Activated CD4-positive, alpha-beta T cell treated with anti-CD3 and anti-CD28 coated beads for 36 hours (primary cell): ENCODE measurements at regions of chr19 and their contacts with region 1.

Region 1: GRCh38 chr19:46147791-46148288 is at the start of gene IGFL2:
- DNase-seq: peak; percentile 45
- ATAC-seq: peak; percentile 92
- H3K4me3 Mint-ChIP-seq: no peak within 1 kb of the TSS
- H3K27ac Mint-ChIP-seq: peak within 1 kb of the TSS; percentile 1
- H3K4me1 Mint-ChIP-seq: peaks cover 12% of the 10 kb centered on the region
- H3K27me3 Mint-ChIP-seq: peaks cover 49% of the 10 kb centered on the region
- total RNA-seq, gene IGFL2: not detected

Region 2: DNA sequence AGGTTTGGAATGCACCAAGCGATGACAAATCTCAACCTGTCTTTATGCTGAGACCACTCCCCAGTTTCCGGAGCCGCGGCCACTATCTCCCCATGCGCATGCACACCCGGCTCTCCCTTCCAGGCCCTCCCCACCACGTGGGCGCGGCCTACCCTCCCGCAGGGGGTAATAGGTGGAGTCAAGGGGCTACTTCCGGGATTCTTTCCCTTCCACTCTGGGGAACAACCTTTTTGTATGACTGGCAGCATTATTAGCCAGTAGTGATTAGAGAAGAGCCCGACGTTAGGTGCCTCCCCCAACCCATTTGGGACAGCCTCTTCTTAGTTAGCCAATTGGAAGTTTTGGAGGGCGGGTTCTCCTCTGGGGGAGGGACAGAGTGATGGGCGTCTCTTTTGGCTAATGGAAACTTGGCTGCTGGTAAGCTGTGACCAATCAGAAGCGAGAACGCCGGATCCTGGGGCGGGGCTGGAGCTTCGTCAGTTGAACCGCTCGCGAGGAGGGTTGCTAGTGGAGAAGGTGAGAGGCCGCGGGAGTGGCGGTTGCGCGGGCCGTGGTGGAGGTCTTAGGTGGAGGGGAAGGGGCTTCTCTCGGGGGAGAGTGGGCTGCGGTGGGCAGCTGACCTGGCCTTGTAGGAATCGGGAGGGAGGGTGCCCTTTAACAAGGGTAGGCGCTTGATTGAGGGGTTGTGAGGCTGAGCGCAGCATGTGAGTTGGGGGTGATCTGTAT is 152.7 kb before region 1 on chr19 and contains the start of gene CCDC61:
- CTCF ChIA-PET with region 1: no interaction called
- POLR2A ChIA-PET with region 1: no interaction called
- intact Hi-C with region 1: no loop called
- DNase-seq: peak; percentile 96
- ATAC-seq: peak; percentile 98
- H3K4me3 Mint-ChIP-seq: no peak within 1 kb of the TSS
- H3K27ac Mint-ChIP-seq: no peak within 1 kb of the TSS
- H3K4me1 Mint-ChIP-seq: peaks cover 22% of the 10 kb centered on the region
- H3K27me3 Mint-ChIP-seq: peaks cover 7% of the 10 kb centered on the region
- total RNA-seq, gene CCDC61: 22.4 to 26.2 TPM

Region 3: GRCh38 chr19:46115396-46116106 is 32.3 kb before region 1 on chr19:
- CTCF ChIA-PET with region 1: no interaction called
- POLR2A ChIA-PET with region 1: no interaction called
- intact Hi-C with region 1: loop called (anchors 2 kb)
- DNase-seq: peak; percentile 84
- ATAC-seq: peak; percentile 99
- H3K4me3 Mint-ChIP-seq: no peak overlapping the region
- H3K27ac Mint-ChIP-seq: no peak overlapping the region
- H3K4me1 Mint-ChIP-seq: peaks cover 13% of the 10 kb centered on the region
- H3K27me3 Mint-ChIP-seq: peaks cover 59% of the 10 kb centered on the region

Region 4: GRCh38 chr19:46181388-46181779 is 33.5 kb after region 1 on chr19:
- CTCF ChIA-PET with region 1: no interaction called
- POLR2A ChIA-PET with region 1: interaction called, 4 read pairs
- intact Hi-C with region 1: loop called in 1 of 2 experiments (anchors 1 kb)
- DNase-seq: peak; percentile 60
- ATAC-seq: peak; percentile 91
- H3K4me3 Mint-ChIP-seq: no peak overlapping the region
- H3K27ac Mint-ChIP-seq: no peak overlapping the region
- H3K4me1 Mint-ChIP-seq: peaks cover 27% of the 10 kb centered on the region
- H3K27me3 Mint-ChIP-seq: peaks cover 37% of the 10 kb centered on the region